Left lung (tissue), 14 donors: ENCODE measurements at regions of chr3 and their contacts with region 1.

Region 1: GRCh38 chr3:16550676-16551341 is 37.3 kb upstream of the RFTN1 start:
- DNase-seq: peak in 3 of 4 donors; percentile 54 to 89 (median 81)
- ATAC-seq: peak; percentile 99
- H3K4me3 ChIP-seq: no peak overlapping the region
- H3K27ac ChIP-seq: no peak overlapping the region
- H3K4me1 ChIP-seq: peaks cover 0 to 5% of the 10 kb centered on the region in 2 donors
- H3K27me3 ChIP-seq: no peaks in the 10 kb centered on the region
- CTCF ChIP-seq: peak; percentile 76 to 85

Region 2: GRCh38 chr3:16286161-16286560 is 264.6 kb before region 1 on chr3:
- intact Hi-C with region 1: loop called in 1 of 2 experiments (anchors 5 kb)
- DNase-seq: no peak
- ATAC-seq: peak; percentile 7
- H3K4me3 ChIP-seq: peak overlapping the region in 1 of 2 donors; percentile 10
- H3K27ac ChIP-seq: peak overlapping the region in 1 of 2 donors; percentile 42
- H3K4me1 ChIP-seq: peaks cover 7 to 28% of the 10 kb centered on the region in 2 donors
- H3K27me3 ChIP-seq: no peaks in the 10 kb centered on the region
- CTCF ChIP-seq: no peak

Region 3: DNA sequence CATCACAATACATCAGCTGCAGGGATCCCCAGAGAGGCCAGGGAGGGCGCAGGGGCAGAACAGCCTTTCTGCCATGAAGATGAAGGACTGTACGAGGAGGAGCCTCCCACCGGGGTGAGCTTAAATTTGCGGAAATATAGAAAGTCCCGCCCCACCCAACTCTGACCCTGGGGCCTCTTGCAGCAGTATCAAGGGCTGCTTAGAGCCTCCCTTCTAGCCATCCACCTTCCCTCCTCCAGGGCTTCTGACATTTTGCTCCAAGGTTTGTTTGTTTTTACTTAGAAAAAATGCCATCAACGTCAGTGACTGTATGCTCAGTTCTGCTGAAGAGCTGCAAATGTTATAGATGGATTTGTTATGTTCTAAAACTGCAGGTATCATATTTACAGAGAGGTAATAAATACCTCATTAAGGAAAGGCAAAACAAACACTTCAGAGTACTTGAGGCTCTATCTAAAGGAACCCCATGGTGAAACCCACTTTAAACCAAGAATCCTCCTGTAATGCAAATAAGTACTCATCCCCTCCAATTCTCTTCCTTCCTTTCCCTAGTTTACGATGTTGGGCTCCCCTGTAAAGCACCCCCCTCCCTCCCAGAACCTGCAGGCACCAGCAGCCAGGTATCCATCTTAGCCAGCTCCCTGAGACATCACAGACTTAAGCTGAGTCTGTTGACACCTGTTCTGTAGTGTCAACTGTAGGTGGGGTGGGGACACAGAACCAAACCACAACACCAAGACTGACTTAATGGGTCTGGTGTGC is 67.9 kb before region 1 on chr3:
- intact Hi-C with region 1: no loop called
- DNase-seq: peak in 2 of 4 donors; percentile 64 to 67
- ATAC-seq: peak; percentile 80
- H3K4me3 ChIP-seq: no peak overlapping the region
- H3K27ac ChIP-seq: peak overlapping the region; percentile 55 to 64
- H3K4me1 ChIP-seq: peaks cover 33 to 42% of the 10 kb centered on the region in 2 donors
- H3K27me3 ChIP-seq: no peaks in the 10 kb centered on the region
- CTCF ChIP-seq: no peak

Region 4: DNA sequence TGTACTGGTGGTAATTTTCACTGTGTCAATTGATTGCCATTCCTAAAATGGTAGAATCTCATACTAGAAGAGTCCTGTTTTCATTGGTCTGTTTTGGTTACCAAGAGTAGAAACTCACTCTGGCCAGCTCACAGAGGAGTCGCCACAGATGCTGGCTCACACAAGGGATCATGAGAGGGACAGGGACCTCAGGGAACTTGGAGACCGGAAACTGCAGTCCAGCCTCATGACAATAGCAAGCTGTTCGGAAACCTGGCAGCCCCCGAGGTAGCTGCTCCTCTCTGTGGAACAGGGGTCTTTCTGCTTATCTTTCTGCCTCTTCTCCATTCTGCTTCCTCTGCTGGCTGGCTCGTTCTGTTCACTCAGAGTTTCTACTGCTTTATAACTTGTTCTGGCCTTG is 526.8 kb after region 1 on chr3:
- intact Hi-C with region 1: no loop called
- DNase-seq: peak in 1 of 4 donors; percentile 24
- ATAC-seq: no peak
- H3K4me3 ChIP-seq: no peak overlapping the region
- H3K27ac ChIP-seq: no peak overlapping the region
- H3K4me1 ChIP-seq: no peaks in the 10 kb centered on the region
- H3K27me3 ChIP-seq: no peaks in the 10 kb centered on the region
- CTCF ChIP-seq: no peak